ENCODE measurements at regions of chr9 and their contacts with region 1.

Region 1: GRCh38 chr9:112074250-112075008 is 100.7 kb downstream of the SUSD1 start:
- DNase-seq: peak; percentile 79
- H3K4me3 ChIP-seq: peak overlapping the region in 2 of 4 donors; percentile 5 to 26
- H3K27ac ChIP-seq: peak overlapping the region; percentile 72 to 93 (median 82)
- H3K4me1 ChIP-seq: peaks cover 0 to 37% (median 30%) of the 10 kb centered on the region in 4 donors
- H3K27me3 ChIP-seq: no peaks in the 10 kb centered on the region
- CTCF ChIP-seq: peak; percentile 83 to 95 (median 91)
- EP300 ChIP-seq: peak; percentile 74 to 99 (median 96)
- POLR2A ChIP-seq: no peak

Region 2: DNA sequence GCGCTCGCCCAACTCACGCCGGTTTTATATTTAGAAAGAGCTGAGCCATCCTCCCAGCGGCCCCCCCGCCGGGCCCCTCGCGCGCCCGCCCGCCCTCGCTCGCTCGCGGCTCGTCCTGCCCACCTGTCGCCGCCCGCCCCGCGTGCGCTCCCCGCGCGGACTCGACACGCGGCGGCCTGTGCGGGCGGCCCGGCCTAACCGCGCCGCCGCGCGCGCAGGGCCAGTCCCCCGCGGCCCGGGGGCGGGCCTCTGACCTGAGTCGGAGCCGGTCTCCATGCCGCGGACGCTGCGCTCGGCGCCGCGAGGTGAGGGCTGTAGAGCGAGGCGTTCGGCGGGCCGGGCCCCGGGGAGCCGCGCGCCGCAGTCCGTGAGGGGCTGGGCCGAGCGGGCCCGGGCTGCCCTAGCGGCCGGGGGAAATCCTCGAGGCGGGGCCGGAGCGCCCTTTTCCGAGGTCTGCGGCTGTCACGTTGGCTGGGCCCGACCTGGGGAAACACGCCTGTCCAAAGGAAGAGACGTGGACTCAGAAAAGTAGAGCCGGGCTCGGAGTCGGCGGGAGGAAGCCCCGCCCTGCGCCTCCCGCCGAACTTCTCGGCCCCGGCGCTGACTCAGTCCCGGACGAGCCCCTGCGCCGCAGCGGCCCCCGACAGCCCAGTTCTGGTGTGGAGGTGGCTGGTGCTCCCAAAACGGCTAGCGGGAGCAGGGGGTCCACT is 590.4 kb before region 1 on chr9 and contains the start of gene ECPAS:
- intact Hi-C with region 1: loop called (anchors 10 kb)
- DNase-seq: peak; percentile 88
- H3K4me3 ChIP-seq: peak within 1 kb of the TSS; percentile 68 to 98 (median 90)
- H3K27ac ChIP-seq: peak within 1 kb of the TSS; percentile 98 to 100 (median 99)
- H3K4me1 ChIP-seq: peaks cover 0 to 38% (median 20%) of the 10 kb centered on the region in 4 donors
- H3K27me3 ChIP-seq: no peaks in the 10 kb centered on the region
- CTCF ChIP-seq: no peak
- EP300 ChIP-seq: no peak
- POLR2A ChIP-seq: peak in 1 of 2 donors; percentile 9
- total RNA-seq, gene ECPAS: 61.4 to 92.8 (median 75.0) TPM

Region 3: GRCh38 chr9:111631071-111631971 is 443.1 kb before region 1 on chr9 and contains the start of gene DNAJC25:
- intact Hi-C with region 1: loop called (anchors 10 kb)
- DNase-seq: peak; percentile 98
- H3K4me3 ChIP-seq: peak within 1 kb of the TSS; percentile 82 to 97 (median 88)
- H3K27ac ChIP-seq: peak within 1 kb of the TSS; percentile 91 to 94 (median 92)
- H3K4me1 ChIP-seq: peaks cover 0 to 35% (median 25%) of the 10 kb centered on the region in 4 donors
- H3K27me3 ChIP-seq: no peaks in the 10 kb centered on the region
- CTCF ChIP-seq: no peak
- EP300 ChIP-seq: no peak
- POLR2A ChIP-seq: peak; percentile 86 to 87
- total RNA-seq, gene DNAJC25: 7.4 to 11.5 (median 9.1) TPM

Region 4: GRCh38 chr9:111828193-111828592 is 246.2 kb before region 1 on chr9:
- intact Hi-C with region 1: loop called (anchors 10 kb)
- DNase-seq: no peak
- H3K4me3 ChIP-seq: no peak overlapping the region
- H3K27ac ChIP-seq: no peak overlapping the region
- H3K4me1 ChIP-seq: peaks cover 0 to 6% (median 0%) of the 10 kb centered on the region in 4 donors
- H3K27me3 ChIP-seq: no peaks in the 10 kb centered on the region
- CTCF ChIP-seq: no peak
- EP300 ChIP-seq: no peak
- POLR2A ChIP-seq: no peak

Region 5: DNA sequence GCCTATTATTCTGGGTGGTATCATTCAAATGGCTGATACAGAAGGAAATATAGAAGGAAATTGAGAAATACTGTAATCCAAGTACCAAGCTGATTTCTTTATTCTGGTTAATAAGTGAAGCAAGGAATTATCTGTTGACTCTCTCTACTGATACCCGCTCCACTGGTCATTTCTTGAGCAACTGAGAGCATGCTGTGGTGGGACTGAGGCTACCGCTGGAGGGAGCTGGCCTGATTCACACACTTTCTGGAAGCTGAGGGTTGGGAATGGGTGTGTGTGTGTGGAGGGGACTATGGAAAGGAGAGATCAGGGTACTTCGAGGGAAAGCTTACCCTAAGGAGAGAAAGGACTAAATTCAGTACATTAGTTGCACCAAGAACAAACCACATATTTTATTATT is 73.7 kb before region 1 on chr9:
- intact Hi-C with region 1: no loop called
- DNase-seq: no peak
- H3K4me3 ChIP-seq: no peak overlapping the region
- H3K27ac ChIP-seq: no peak overlapping the region
- H3K4me1 ChIP-seq: no peaks in the 10 kb centered on the region
- H3K27me3 ChIP-seq: no peaks in the 10 kb centered on the region
- CTCF ChIP-seq: no peak
- EP300 ChIP-seq: no peak
- POLR2A ChIP-seq: no peak

Region 6: GRCh38 chr9:112012026-112012902 is 62.2 kb before region 1 on chr9:
- intact Hi-C with region 1: loop called (anchors 5 kb)
- DNase-seq: peak; percentile 83
- H3K4me3 ChIP-seq: no peak overlapping the region
- H3K27ac ChIP-seq: peak overlapping the region; percentile 72 to 88 (median 82)
- H3K4me1 ChIP-seq: peaks cover 0 to 32% (median 25%) of the 10 kb centered on the region in 4 donors
- H3K27me3 ChIP-seq: no peaks in the 10 kb centered on the region
- CTCF ChIP-seq: no peak
- EP300 ChIP-seq: peak in 1 of 4 donors; percentile 22
- POLR2A ChIP-seq: no peak

Region 7: GRCh38 chr9:112207451-112207850 is 133.0 kb after region 1 on chr9:
- intact Hi-C with region 1: no loop called
- DNase-seq: no peak
- H3K4me3 ChIP-seq: no peak overlapping the region
- H3K27ac ChIP-seq: no peak overlapping the region
- H3K4me1 ChIP-seq: no peaks in the 10 kb centered on the region
- H3K27me3 ChIP-seq: no peaks in the 10 kb centered on the region
- CTCF ChIP-seq: no peak
- EP300 ChIP-seq: no peak
- POLR2A ChIP-seq: no peak